ENCODE measurements at regions of chr9 and their contacts with region 1.

Region 1: DNA sequence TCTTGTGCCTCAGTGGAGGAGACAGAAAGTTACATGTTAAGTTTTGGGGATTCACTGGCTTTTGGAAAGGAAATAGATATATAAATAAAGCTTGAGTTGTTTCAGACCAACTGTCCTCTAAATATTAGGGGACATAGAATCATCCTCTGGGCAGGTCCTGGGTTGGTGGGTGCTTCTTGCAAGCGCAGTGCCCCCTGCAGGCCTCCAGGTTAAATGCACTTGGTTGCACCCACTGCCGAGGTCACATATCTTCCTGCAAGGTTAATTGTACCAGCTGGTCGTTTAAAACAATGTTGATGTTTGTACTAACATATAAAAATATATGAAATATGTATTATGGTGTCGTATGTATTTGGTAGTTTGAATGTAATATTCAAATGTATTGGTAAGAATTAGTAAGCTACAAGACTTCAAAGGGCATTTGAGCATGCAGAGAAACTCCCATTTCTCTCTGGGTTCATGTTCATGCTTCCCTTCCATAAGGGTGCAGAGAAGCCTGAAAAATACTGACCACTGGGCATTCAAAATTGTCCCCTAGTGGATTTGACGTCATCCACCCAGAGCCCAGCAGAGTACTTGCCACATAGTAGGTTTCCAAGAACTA is 87.0 kb downstream of the ZNF618 start:
- DNase-seq: peak; percentile 22 to 29
- ATAC-seq: peak; percentile 47 to 61 (median 53)
- H3K4me3 ChIP-seq: no peak overlapping the region
- H3K4me3 Mint-ChIP-seq: no peak overlapping the region
- H3K27ac ChIP-seq: no peak overlapping the region
- H3K27ac Mint-ChIP-seq: no peak overlapping the region
- H3K4me1 ChIP-seq: no peaks in the 10 kb centered on the region
- H3K4me1 Mint-ChIP-seq: peaks cover 0 to 4% of the 10 kb centered on the region in 2 donors
- H3K27me3 ChIP-seq: no peaks in the 10 kb centered on the region
- H3K27me3 Mint-ChIP-seq: no peaks in the 10 kb centered on the region
- CTCF ChIP-seq: peak; percentile 66

Region 2: GRCh38 chr9:113682297-113682771 is 280.8 kb before region 1 on chr9:
- intact Hi-C with region 1: loop called (anchors 10 kb)
- DNase-seq: peak; percentile 48 to 62
- ATAC-seq: peak; percentile 38 to 54 (median 54)
- H3K4me3 ChIP-seq: no peak overlapping the region
- H3K4me3 Mint-ChIP-seq: no peak overlapping the region
- H3K27ac ChIP-seq: no peak overlapping the region
- H3K27ac Mint-ChIP-seq: peak overlapping the region in 1 of 2 donors; percentile 9
- H3K4me1 ChIP-seq: peaks cover 25% of the 10 kb centered on the region
- H3K4me1 Mint-ChIP-seq: peaks cover 28 to 48% of the 10 kb centered on the region in 2 donors
- H3K27me3 ChIP-seq: peaks cover 2% of the 10 kb centered on the region
- H3K27me3 Mint-ChIP-seq: peaks cover 11 to 18% of the 10 kb centered on the region in 2 donors
- CTCF ChIP-seq: peak; percentile 98

Region 3: DNA sequence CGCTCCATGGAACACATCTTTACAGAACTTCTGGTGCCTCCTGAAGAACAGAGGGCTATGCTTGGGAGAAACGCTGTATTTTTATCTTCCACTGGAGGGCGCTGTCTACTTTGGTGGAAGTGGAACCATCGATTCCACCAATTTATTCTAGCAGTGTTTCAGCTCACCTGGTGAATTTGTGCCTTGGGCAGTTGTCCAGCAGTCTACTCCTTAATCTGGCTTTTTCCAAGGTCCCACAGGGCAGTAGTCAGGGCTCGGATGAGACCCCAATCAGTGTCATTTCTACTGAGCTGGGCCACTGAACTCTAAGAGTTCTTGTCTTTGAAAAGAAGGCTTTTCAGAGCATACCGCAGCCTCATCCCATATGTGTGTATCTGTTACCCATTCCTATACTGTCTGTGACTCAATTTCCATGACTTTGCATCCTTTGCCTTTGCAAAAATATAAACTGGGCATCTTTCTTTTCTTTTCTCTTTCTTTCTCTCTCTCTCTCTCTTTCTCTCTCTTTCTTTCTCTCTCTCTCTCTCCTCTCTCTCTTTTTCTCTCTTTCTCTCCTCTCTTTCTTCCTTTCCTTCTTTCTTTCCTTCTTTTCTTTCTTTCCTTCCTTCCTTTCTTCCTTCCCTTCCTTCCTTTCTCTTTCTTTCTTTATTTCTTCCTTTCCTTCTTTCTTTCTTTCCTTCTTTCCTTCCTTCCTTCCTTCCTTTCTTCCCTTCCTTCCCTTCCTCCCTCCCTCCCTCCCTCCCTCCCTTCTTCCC is 225.4 kb before region 1 on chr9:
- intact Hi-C with region 1: loop called (anchors 1 kb)
- DNase-seq: peak; percentile 21 to 36
- ATAC-seq: peak in 2 of 3 donors; percentile 46 to 57
- H3K4me3 ChIP-seq: no peak overlapping the region
- H3K4me3 Mint-ChIP-seq: no peak overlapping the region
- H3K27ac ChIP-seq: no peak overlapping the region
- H3K27ac Mint-ChIP-seq: no peak overlapping the region
- H3K4me1 ChIP-seq: no peaks in the 10 kb centered on the region
- H3K4me1 Mint-ChIP-seq: peaks cover 5 to 13% of the 10 kb centered on the region in 2 donors
- H3K27me3 ChIP-seq: no peaks in the 10 kb centered on the region
- H3K27me3 Mint-ChIP-seq: peaks cover 6 to 12% of the 10 kb centered on the region in 2 donors
- CTCF ChIP-seq: peak; percentile 73

Region 4: DNA sequence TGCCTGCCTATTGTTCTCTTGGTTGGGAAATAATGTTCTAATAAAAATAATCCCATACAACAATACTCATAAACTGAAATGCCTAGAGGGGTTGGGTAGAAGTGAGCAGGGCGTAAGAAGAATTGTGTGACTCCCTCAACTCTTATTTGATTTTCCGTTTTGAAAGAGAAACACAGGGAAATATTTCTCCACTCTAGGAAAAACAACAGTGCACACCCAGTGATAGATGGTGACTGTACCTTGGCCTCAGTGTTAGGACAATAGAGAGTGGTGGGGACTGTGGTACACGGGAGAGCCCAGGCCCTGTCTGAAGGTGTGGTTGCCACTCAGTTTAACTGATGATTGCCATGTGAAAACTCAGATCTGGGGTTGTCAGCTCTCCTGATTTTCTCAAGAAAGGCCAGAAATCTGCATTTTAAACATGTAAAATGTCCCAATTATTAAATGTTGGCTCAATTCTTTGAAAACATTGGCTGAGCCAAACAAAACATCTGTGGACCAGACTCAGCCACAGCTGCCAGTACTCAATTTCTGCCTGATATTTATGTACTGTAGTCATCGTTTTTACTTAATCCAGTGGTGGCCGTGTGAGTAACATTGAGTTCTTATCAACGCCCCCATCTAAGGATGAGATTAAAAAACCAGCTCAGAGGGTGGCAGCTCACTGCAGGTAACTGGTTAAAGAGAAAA is 190.9 kb before region 1 on chr9:
- intact Hi-C with region 1: no loop called
- DNase-seq: no peak
- ATAC-seq: no peak
- H3K4me3 ChIP-seq: no peak overlapping the region
- H3K4me3 Mint-ChIP-seq: no peak overlapping the region
- H3K27ac ChIP-seq: no peak overlapping the region
- H3K27ac Mint-ChIP-seq: no peak overlapping the region
- H3K4me1 ChIP-seq: no peaks in the 10 kb centered on the region
- H3K4me1 Mint-ChIP-seq: peaks cover 8% of the 10 kb centered on the region in 2 donors
- H3K27me3 ChIP-seq: no peaks in the 10 kb centered on the region
- H3K27me3 Mint-ChIP-seq: peaks cover 2 to 7% of the 10 kb centered on the region in 2 donors
- CTCF ChIP-seq: no peak

Region 5: GRCh38 chr9:113807173-113808061 is 155.7 kb before region 1 on chr9:
- intact Hi-C with region 1: loop called (anchors 2 kb)
- DNase-seq: peak; percentile 25 to 62
- ATAC-seq: peak; percentile 68 to 85 (median 70)
- H3K4me3 ChIP-seq: no peak overlapping the region
- H3K4me3 Mint-ChIP-seq: no peak overlapping the region
- H3K27ac ChIP-seq: no peak overlapping the region
- H3K27ac Mint-ChIP-seq: no peak overlapping the region
- H3K4me1 ChIP-seq: no peaks in the 10 kb centered on the region
- H3K4me1 Mint-ChIP-seq: peaks cover 0 to 6% of the 10 kb centered on the region in 2 donors
- H3K27me3 ChIP-seq: peaks cover 1% of the 10 kb centered on the region
- H3K27me3 Mint-ChIP-seq: peaks cover 1 to 2% of the 10 kb centered on the region in 2 donors
- CTCF ChIP-seq: peak; percentile 96

Region 6: GRCh38 chr9:113979343-113980127 is 16.4 kb after region 1 on chr9:
- intact Hi-C with region 1: no loop called
- DNase-seq: no peak
- ATAC-seq: no peak
- H3K4me3 ChIP-seq: no peak overlapping the region
- H3K4me3 Mint-ChIP-seq: no peak overlapping the region
- H3K27ac ChIP-seq: no peak overlapping the region
- H3K27ac Mint-ChIP-seq: no peak overlapping the region
- H3K4me1 ChIP-seq: no peaks in the 10 kb centered on the region
- H3K4me1 Mint-ChIP-seq: no peaks in the 10 kb centered on the region
- H3K27me3 ChIP-seq: no peaks in the 10 kb centered on the region
- H3K27me3 Mint-ChIP-seq: no peaks in the 10 kb centered on the region
- CTCF ChIP-seq: no peak